ENCODE measurements at regions of chr5 and their contacts with region 1.

Region 1: GRCh38 chr5:55146543-55147151 is 13.3 kb upstream of the GPX8 start:
- DNase-seq: peak; percentile 65 to 86 (median 76)
- ATAC-seq: peak; percentile 91 to 100 (median 98)
- H3K4me3 ChIP-seq: no peak overlapping the region
- H3K27ac ChIP-seq: no peak overlapping the region
- H3K4me1 ChIP-seq: no peaks in the 10 kb centered on the region
- H3K27me3 ChIP-seq: no peaks in the 10 kb centered on the region
- CTCF ChIP-seq: peak; percentile 77 to 89 (median 82)

Region 2: GRCh38 chr5:54719384-54720283 is 427.0 kb before region 1 on chr5:
- intact Hi-C with region 1: no loop called
- DNase-seq: no peak
- ATAC-seq: peak in 1 of 4 donors; percentile 19
- H3K4me3 ChIP-seq: no peak overlapping the region
- H3K27ac ChIP-seq: no peak overlapping the region
- H3K4me1 ChIP-seq: no peaks in the 10 kb centered on the region
- H3K27me3 ChIP-seq: no peaks in the 10 kb centered on the region
- CTCF ChIP-seq: no peak

Region 3: GRCh38 chr5:54905943-54906537 is 240.6 kb before region 1 on chr5:
- intact Hi-C with region 1: loop called in 2 of 3 experiments (anchors 5 to 10 kb)
- DNase-seq: peak in 5 of 6 donors; percentile 16 to 74 (median 39)
- ATAC-seq: peak in 3 of 4 donors; percentile 34 to 76 (median 62)
- H3K4me3 ChIP-seq: no peak overlapping the region
- H3K27ac ChIP-seq: no peak overlapping the region
- H3K4me1 ChIP-seq: no peaks in the 10 kb centered on the region
- H3K27me3 ChIP-seq: no peaks in the 10 kb centered on the region
- CTCF ChIP-seq: peak; percentile 10 to 44 (median 32)

Region 4: GRCh38 chr5:54936201-54936600 is 210.4 kb before region 1 on chr5:
- intact Hi-C with region 1: loop called in 2 of 3 experiments (anchors 10 kb)
- DNase-seq: no peak
- ATAC-seq: no peak
- H3K4me3 ChIP-seq: no peak overlapping the region
- H3K27ac ChIP-seq: no peak overlapping the region
- H3K4me1 ChIP-seq: no peaks in the 10 kb centered on the region
- H3K27me3 ChIP-seq: peaks cover 0 to 10% (median 0%) of the 10 kb centered on the region in 4 donors
- CTCF ChIP-seq: no peak

Region 5: GRCh38 chr5:54944364-54944763 is 202.3 kb before region 1 on chr5:
- intact Hi-C with region 1: loop called in 2 of 3 experiments (anchors 10 kb)
- DNase-seq: peak in 1 of 6 donors; percentile 12
- ATAC-seq: peak in 3 of 4 donors; percentile 52 to 65 (median 64)
- H3K4me3 ChIP-seq: no peak overlapping the region
- H3K27ac ChIP-seq: no peak overlapping the region
- H3K4me1 ChIP-seq: no peaks in the 10 kb centered on the region
- H3K27me3 ChIP-seq: no peaks in the 10 kb centered on the region
- CTCF ChIP-seq: peak; percentile 29 to 62 (median 49)

Region 6: DNA sequence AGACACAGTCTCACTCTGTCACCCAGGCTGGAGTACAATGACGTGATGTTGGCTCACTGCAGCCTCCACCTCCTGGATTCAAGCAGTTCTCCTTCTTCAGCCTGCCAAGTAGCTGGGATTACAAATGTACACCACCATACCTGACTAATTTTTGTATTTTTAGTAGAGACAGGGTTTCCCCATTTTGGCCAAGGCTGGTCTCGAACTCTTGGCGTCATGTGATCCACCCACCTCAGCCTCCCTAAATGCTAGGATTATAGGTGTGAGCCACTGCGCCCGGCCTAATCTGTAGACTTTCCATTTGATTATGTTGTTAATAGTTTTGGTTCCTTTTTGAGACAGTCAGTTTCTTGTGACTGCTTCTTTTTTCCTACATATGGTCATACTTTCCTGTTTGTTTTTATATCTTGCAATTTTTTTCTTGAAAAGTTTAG is 192.2 kb after region 1 on chr5:
- intact Hi-C with region 1: no loop called
- DNase-seq: no peak
- ATAC-seq: no peak
- H3K4me3 ChIP-seq: no peak overlapping the region
- H3K27ac ChIP-seq: no peak overlapping the region
- H3K4me1 ChIP-seq: peaks cover 0 to 9% (median 8%) of the 10 kb centered on the region in 3 donors
- H3K27me3 ChIP-seq: no peaks in the 10 kb centered on the region
- CTCF ChIP-seq: no peak